ENCODE measurements at regions of chr22 and their contacts with region 1.

Region 1: GRCh38 chr22:23774743-23775566 is 2.3 kb downstream of the MMP11 start:
- DNase-seq: no peak
- H3K4me3 ChIP-seq: no peak overlapping the region
- H3K27ac ChIP-seq: no peak overlapping the region
- H3K4me1 ChIP-seq: peaks cover 2 to 24% (median 18%) of the 10 kb centered on the region in 4 experiments
- H3K27me3 ChIP-seq: peaks cover 0 to 10% (median 0%) of the 10 kb centered on the region in 5 experiments

Region 2: GRCh38 chr22:23591201-23591791 is 183.7 kb before region 1 on chr22:
- CTCF ChIA-PET with region 1: no interaction called
- POLR2A ChIA-PET with region 1: no interaction called
- DNase-seq: peak; percentile 77 to 86 (median 78)
- H3K4me3 ChIP-seq: no peak overlapping the region
- H3K27ac ChIP-seq: peak overlapping the region in 1 of 2 experiments; percentile 45
- H3K4me1 ChIP-seq: peaks cover 5 to 37% (median 32%) of the 10 kb centered on the region in 4 experiments
- H3K27me3 ChIP-seq: no peaks in the 10 kb centered on the region

Region 3: GRCh38 chr22:23789638-23790037 is 14.7 kb after region 1 on chr22:
- CTCF ChIA-PET with region 1: interaction called, 14 read pairs
- POLR2A ChIA-PET with region 1: interaction called, 4 read pairs
- DNase-seq: no peak
- H3K4me3 ChIP-seq: no peak overlapping the region
- H3K27ac ChIP-seq: no peak overlapping the region
- H3K4me1 ChIP-seq: peaks cover 8 to 25% (median 20%) of the 10 kb centered on the region in 4 experiments
- H3K27me3 ChIP-seq: no peaks in the 10 kb centered on the region

Region 4: GRCh38 chr22:23868580-23868979 is 93.6 kb after region 1 on chr22:
- CTCF ChIA-PET with region 1: no interaction called
- POLR2A ChIA-PET with region 1: no interaction called
- DNase-seq: no peak
- H3K4me3 ChIP-seq: no peak overlapping the region
- H3K27ac ChIP-seq: no peak overlapping the region
- H3K4me1 ChIP-seq: no peaks in the 10 kb centered on the region
- H3K27me3 ChIP-seq: no peaks in the 10 kb centered on the region

Measured in common myeloid progenitor, CD34-positive (primary cell).